ENCODE measurements at regions of chr6 and their contacts with region 1.

Region 1: GRCh38 chr6:45436544-45437438 is 59.1 kb upstream of the SUPT3H start:
- DNase-seq: no peak
- H3K4me3 Mint-ChIP-seq: peak overlapping the region; percentile 70
- H3K27ac Mint-ChIP-seq: peak overlapping the region; percentile 86
- H3K4me1 Mint-ChIP-seq: peaks cover 59% of the 10 kb centered on the region
- H3K27me3 Mint-ChIP-seq: no peaks in the 10 kb centered on the region

Region 2: GRCh38 chr6:45454008-45454911 is 17.5 kb after region 1 on chr6:
- intact Hi-C with region 1: loop called (anchors 2 kb)
- DNase-seq: no peak
- H3K4me3 Mint-ChIP-seq: no peak overlapping the region
- H3K27ac Mint-ChIP-seq: no peak overlapping the region
- H3K4me1 Mint-ChIP-seq: peaks cover 53% of the 10 kb centered on the region
- H3K27me3 Mint-ChIP-seq: no peaks in the 10 kb centered on the region

Region 3: GRCh38 chr6:45479834-45480751 is 43.3 kb after region 1 on chr6:
- intact Hi-C with region 1: loop called (anchors 2 kb)
- DNase-seq: no peak
- H3K4me3 Mint-ChIP-seq: no peak overlapping the region
- H3K27ac Mint-ChIP-seq: no peak overlapping the region
- H3K4me1 Mint-ChIP-seq: peaks cover 16% of the 10 kb centered on the region
- H3K27me3 Mint-ChIP-seq: peaks cover 3% of the 10 kb centered on the region

Region 4: GRCh38 chr6:45590225-45590624 is 153.4 kb after region 1 on chr6:
- intact Hi-C with region 1: loop called (anchors 5 kb)
- DNase-seq: no peak
- H3K4me3 Mint-ChIP-seq: no peak overlapping the region
- H3K27ac Mint-ChIP-seq: peak overlapping the region; percentile 74
- H3K4me1 Mint-ChIP-seq: peaks cover 87% of the 10 kb centered on the region
- H3K27me3 Mint-ChIP-seq: no peaks in the 10 kb centered on the region

Region 5: DNA sequence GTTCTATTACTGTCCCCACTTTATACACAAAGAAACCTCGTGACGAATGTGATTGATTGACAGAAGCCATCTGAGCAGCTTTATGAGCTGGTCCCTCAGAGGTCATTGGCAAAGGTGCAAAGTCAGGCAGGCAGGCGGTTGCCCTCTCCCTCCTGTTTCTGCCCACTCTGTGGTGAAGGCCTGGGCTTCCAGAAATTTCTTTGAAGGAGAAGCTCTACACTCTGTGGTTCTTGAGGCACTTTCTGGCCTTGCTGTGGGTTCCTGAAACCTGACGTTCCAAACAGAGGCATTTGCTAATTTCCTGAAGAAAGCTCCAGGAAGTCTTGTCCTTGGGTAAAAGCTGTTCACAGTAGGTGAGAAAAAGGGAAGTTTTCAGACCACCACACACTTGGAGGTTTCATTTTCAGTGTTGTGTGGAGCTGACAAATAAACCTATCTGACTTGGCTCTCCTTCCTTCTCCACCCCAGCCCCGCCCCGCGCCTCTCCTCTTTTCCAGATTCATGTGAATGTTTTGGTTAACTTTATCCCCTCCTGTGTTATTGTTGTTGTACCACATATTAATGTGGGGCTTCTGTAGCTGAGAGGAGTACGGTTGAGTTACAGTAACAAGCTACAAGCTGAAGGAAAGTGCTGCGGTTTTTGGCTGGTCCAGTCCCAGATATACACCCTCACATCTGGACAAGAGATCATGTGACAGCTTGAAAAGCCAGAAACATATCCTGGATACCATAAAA is 304.8 kb after region 1 on chr6:
- intact Hi-C with region 1: loop called (anchors 2 kb)
- DNase-seq: no peak
- H3K4me3 Mint-ChIP-seq: peak overlapping the region; percentile 2
- H3K27ac Mint-ChIP-seq: peak overlapping the region; percentile 27
- H3K4me1 Mint-ChIP-seq: peaks cover 44% of the 10 kb centered on the region
- H3K27me3 Mint-ChIP-seq: peaks cover 3% of the 10 kb centered on the region

Region 6: DNA sequence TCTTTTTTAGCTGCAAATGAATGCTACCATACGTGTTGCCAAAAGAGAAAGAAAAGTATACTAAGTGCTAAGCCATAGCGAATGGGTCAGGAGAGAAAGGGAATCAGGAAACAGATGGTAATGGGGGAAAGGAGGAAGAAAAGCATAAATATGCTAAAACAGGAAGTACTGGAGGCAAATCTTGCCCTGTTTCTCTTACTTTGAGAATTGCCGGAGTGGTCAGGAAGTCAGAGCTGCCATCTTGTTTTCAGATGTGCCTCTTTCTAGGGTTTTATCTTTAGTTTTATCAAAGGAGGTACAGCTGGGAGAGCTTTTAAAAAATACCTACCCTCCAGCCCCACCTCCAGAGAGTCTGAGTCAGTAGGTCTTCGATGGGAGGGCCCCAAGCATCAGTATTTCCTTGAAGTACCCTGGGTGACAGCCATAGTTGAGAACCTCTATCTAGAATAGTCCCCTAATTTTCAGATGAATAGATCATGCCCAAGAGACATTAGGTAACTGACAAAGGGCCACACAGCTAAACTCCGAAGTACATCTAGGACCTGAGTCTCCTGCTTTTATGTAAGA is 385.5 kb after region 1 on chr6:
- intact Hi-C with region 1: loop called (anchors 5 kb)
- DNase-seq: no peak
- H3K4me3 Mint-ChIP-seq: peak overlapping the region; percentile 41
- H3K27ac Mint-ChIP-seq: peak overlapping the region; percentile 76
- H3K4me1 Mint-ChIP-seq: peaks cover 32% of the 10 kb centered on the region
- H3K27me3 Mint-ChIP-seq: no peaks in the 10 kb centered on the region

Region 7: GRCh38 chr6:46491628-46492547 is 1055.1 kb after region 1 on chr6:
- intact Hi-C with region 1: no loop called
- DNase-seq: no peak
- H3K4me3 Mint-ChIP-seq: no peak overlapping the region
- H3K27ac Mint-ChIP-seq: no peak overlapping the region
- H3K4me1 Mint-ChIP-seq: no peaks in the 10 kb centered on the region
- H3K27me3 Mint-ChIP-seq: peaks cover 57% of the 10 kb centered on the region